Endothelial cell of umbilical vein (primary cell): ENCODE measurements at regions of chr10 and their contacts with region 1.

Region 1: GRCh38 chr10:48634198-48634983 is 29.5 kb upstream of the ARHGAP22 start:
- DNase-seq: no peak
- H3K4me3 ChIP-seq: no peak overlapping the region
- H3K27ac ChIP-seq: no peak overlapping the region
- H3K4me1 ChIP-seq: peaks cover 4% of the 10 kb centered on the region
- H3K27me3 ChIP-seq: no peaks in the 10 kb centered on the region
- CTCF ChIP-seq: no peak
- POLR2A ChIP-seq: no peak

Region 2: DNA sequence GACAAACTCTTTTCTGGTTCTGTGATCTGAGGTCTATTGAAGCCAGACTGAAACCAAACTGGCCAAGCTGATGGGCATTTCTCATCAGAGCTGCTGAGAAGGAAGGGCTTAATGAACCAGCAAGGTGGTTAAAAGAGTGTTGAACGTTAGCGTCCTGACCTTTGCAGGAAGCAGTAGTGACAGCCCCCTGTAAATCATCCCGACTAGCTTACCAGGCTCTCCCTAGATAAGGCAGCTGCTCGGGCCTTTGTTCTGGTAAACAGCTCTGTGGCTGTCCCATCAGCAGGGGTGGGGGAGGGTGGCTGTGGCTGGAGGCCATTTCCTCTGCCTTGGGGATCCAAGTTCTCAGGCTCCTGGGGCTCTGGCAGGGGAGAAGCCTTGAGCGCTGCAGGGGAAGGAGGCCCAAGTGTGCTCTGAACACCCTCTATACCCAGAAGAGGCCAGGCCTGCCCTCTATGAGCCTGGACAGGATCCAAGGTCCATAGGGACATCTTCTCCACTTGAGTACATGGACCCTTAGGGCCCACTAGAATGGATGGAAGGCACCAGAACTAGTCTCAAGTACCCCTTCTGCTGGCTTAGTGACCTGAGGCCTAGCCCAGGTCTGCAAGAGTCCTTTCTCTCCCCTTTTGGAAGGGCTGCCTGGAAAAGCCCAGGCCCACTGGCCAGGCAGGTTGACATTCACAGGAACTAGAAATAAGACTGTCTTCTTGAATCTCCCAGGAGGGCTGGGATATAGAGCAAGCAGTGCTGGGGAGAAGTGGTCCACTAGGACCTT is 164.1 kb before region 1 on chr10:
- CTCF ChIA-PET with region 1: no interaction called
- POLR2A ChIA-PET with region 1: no interaction called
- dilution Hi-C with region 1: no loop called
- intact Hi-C with region 1: no loop called
- DNase-seq: peak; percentile 96
- H3K4me3 ChIP-seq: no peak overlapping the region
- H3K27ac ChIP-seq: peak overlapping the region; percentile 54
- H3K4me1 ChIP-seq: peaks cover 22% of the 10 kb centered on the region
- H3K27me3 ChIP-seq: no peaks in the 10 kb centered on the region
- CTCF ChIP-seq: no peak
- POLR2A ChIP-seq: peak; percentile 22

Region 3: DNA sequence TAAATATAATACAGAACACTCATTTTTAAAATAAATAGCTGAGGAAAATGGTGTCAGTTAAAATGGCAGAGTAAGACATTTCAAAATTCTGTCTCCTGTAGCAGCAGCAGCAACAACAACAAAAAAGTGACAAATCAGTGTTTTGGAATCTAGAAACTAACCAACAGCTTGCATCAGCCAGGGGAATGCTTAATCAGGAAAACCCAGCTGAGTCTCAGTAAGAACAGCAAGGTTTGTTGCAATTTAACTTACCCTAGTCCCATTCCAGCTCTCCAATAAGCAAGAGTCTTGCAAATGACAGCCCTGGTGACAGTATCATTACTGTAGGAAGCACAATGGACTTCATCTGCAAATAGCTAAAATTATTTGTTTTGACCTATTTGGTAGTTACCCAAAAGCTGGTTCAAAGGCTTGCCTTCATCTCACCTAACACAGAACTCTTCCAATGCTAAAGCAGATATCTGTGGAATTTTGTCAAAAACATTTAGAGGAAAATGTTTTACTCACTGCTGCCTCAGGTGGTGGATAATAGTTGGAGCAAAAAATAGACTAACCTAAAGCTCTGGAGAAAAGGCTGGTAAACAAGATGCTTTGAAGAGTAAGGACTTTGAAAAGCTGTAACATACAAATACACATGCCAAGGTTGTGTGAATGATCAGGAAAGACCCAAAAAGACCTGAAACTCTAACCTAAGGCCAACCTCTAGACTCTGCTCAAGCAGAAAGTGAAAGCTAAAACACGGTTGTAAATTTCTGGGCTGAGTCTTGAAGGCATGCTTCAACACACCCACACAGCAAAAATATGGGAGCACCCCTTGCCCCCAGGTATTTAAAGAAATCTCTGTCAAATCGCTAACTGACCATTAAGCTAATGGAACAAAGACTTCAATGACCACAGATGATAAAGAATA is 19.7 kb before region 1 on chr10:
- CTCF ChIA-PET with region 1: interaction called, 10 read pairs
- POLR2A ChIA-PET with region 1: no interaction called
- dilution Hi-C with region 1: no loop called
- intact Hi-C with region 1: no loop called
- DNase-seq: peak; percentile 18
- H3K4me3 ChIP-seq: no peak overlapping the region
- H3K27ac ChIP-seq: no peak overlapping the region
- H3K4me1 ChIP-seq: peaks cover 9% of the 10 kb centered on the region
- H3K27me3 ChIP-seq: no peaks in the 10 kb centered on the region
- CTCF ChIP-seq: peak; percentile 15 to 18
- POLR2A ChIP-seq: no peak

Region 4: DNA sequence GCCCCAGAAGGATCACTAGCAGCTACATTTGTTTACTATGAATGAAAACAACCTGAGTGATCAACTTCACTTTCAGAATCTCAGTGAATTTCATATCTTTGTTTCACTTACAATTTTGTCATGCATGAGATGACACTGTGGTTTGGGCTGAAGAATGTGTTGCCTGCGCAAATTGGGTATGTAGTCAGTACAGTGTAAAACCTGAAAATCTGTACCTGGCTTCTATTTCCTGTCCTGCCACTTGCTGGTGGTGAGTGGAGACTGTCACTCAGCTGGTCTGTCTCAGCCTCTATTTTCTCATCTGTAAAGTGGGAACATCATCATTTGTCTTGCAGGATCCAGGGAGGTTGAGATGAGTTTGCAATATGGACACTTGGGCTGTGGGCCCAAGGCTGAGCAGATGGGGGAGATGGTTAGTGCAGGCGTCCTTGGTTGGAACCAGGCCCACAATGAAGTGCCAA is 168.2 kb after region 1 on chr10:
- CTCF ChIA-PET with region 1: no interaction called
- POLR2A ChIA-PET with region 1: no interaction called
- dilution Hi-C with region 1: no loop called
- intact Hi-C with region 1: no loop called
- DNase-seq: no peak
- H3K4me3 ChIP-seq: no peak overlapping the region
- H3K27ac ChIP-seq: no peak overlapping the region
- H3K4me1 ChIP-seq: peaks cover 3% of the 10 kb centered on the region
- H3K27me3 ChIP-seq: peaks cover 0 to 1% of the 10 kb centered on the region in 2 experiments
- CTCF ChIP-seq: no peak
- POLR2A ChIP-seq: no peak

Region 5: DNA sequence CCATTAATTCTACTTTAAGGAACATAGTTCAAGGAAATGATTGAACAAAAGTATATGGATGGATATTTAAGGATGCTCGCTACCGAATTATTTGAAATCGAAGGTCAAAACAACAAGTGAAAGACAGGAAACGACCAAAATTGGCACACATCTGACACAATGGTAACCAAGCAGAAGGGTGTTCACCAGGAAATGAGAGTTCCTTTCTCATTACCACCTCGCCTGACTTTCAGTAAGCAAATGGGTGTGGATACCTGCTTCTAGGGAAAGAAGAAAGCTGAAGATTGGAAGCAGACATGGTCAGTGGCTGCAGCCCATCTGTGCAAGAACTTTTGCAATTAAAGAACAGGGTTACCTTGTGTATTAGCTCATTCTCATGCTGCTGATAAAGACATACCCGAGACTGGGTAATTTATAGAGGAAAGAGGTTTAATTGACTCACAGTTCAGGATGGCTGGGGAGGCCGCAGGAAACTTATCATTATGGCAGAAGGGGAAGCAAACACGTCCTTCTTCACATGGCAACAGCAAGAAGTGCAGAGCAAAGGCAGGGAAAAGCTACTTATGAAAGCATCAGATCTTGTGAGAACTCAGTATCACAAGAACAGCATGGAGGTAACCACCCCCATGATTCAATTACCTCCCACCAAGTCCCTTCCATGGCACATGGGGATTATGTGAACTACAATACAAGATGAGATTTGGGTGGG is 560.0 kb after region 1 on chr10:
- CTCF ChIA-PET with region 1: no interaction called
- POLR2A ChIA-PET with region 1: no interaction called
- dilution Hi-C with region 1: no loop called
- intact Hi-C with region 1: no loop called
- DNase-seq: peak; percentile 79
- H3K4me3 ChIP-seq: peak overlapping the region in 1 of 3 experiments; percentile 18
- H3K27ac ChIP-seq: peak overlapping the region; percentile 90
- H3K4me1 ChIP-seq: peaks cover 17% of the 10 kb centered on the region
- H3K27me3 ChIP-seq: no peaks in the 10 kb centered on the region
- CTCF ChIP-seq: no peak
- POLR2A ChIP-seq: no peak